Dendritic cell treated with granulocyte-macrophage colony-stimulating factor and Interleukin-4, amounts not matched to agents 40 ng/mL and 50 ng/mL, for 4 days (primary cell): ENCODE measurements at regions of chr2 and their contacts with region 1.

Region 1: DNA sequence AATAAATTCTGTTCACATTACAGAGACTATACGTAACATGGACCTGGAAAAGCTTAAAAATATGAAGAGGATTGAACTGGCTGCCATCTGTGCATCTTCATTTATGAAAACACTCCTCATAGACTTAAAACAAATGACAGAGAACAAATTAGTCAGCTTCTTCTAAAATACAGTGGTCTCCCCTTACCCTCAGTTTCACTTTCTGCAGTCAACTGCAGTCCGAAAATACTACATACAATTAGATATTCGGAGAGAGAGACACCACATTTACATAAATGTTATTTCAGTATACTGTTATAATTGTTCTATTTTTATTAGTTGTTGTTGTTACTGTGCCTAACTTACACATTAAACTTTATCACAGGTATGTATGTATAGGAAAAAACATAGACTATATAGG is 6.5 kb downstream of the RNF103 start:
- H3K4me3 Mint-ChIP-seq: no peak overlapping the region
- H3K27ac Mint-ChIP-seq: no peak overlapping the region
- H3K4me1 Mint-ChIP-seq: peaks cover 10% of the 10 kb centered on the region
- H3K27me3 Mint-ChIP-seq: no peaks in the 10 kb centered on the region

Region 2: DNA sequence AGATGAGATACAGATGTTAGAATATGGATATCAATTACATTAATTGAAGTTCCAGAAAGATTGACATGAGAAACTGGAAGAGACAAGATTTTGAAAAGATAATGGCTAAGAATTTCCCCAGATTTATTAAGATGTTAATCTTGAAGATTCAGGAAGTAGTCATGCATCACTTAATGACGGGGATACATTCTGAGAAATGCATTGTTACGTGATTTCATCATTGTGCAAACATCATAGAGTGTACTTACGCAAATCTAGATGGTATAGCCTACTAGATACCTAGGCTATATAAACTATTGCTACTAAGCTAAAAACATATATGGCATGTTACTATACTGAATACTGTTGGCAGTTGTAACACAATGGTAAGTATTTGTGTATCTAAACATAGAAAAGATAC is 47.1 kb before region 1 on chr2:
- intact Hi-C with region 1: loop called (anchors 5 kb)
- H3K4me3 Mint-ChIP-seq: no peak overlapping the region
- H3K27ac Mint-ChIP-seq: no peak overlapping the region
- H3K4me1 Mint-ChIP-seq: no peaks in the 10 kb centered on the region
- H3K27me3 Mint-ChIP-seq: no peaks in the 10 kb centered on the region